ENCODE measurements at regions of chr7 and their contacts with region 1.

Region 1: DNA sequence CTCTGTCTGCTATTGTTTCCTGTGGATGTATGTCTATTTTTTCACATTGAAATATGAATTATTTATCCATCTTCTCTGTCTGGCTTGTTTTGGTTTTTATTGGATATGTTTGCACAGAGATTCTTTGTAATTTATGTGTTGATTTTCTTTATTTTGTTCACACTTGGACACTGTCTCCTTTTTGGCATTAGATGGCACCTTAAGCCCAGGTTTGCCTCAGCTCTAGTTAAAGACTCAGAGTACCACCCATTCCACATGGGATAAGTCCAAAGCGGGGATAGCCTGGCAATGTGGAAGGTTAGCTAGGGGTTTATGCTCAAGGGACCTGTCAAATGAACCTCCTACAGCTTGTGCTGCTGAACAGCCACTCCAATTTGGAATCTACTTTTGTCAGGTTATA is 14.1 kb downstream of the FEZF1 start:
- DNase-seq: no peak
- ATAC-seq: no peak
- H3K4me3 Mint-ChIP-seq: no peak overlapping the region
- H3K27ac Mint-ChIP-seq: no peak overlapping the region
- H3K4me1 Mint-ChIP-seq: no peaks in the 10 kb centered on the region
- H3K27me3 Mint-ChIP-seq: peaks cover 4% of the 10 kb centered on the region
- CTCF ChIP-seq: no peak

Region 2: DNA sequence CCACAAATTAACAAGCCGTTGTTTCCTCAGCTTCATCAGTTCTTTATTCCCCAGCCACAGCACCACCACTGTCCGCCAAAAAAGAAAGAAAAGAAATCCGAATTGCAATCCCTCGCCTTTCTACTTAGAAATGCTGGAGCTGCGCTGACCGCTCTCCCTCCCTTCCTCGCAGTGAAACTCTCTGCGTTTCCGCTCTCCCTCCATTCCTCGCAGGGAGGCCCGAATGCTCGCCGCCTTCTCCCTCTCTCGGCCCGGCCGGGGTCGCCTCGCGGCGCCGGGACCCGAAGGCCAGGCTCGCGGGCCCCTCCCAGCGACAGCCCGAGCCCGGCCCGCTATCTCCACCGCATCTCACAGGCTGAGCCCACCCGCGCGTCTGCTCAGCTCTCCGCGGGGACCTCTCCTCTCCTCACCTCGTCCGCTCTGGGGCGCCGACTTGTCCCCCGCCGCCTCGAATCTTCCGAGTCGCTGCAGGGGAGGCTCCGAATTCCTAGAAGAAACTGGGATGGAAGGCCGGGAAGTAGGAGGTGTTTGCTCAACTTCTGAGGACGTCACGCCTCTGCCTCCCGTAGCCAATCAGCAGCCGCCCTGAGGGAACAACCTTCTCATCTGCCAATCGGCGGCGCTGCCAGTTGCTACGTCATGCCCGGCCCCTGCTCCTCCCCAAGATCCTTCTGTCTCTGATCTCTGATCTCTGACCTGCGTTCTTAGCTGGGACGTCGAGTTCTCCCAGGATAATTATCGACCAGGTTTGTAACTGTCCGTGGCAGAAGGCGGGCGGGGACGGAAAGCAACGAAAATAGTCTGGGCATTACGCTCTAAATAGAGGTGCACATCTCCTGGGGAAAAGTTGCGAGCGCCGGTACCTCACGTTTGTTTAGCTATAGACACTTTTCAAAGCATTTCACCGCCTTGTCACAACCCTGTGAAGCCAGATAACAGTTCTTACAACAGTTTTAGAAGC is 146.4 kb before region 1 on chr7 and contains the start of gene AASS:
- CTCF ChIA-PET with region 1: no interaction called
- POLR2A ChIA-PET with region 1: no interaction called
- intact Hi-C with region 1: no loop called
- DNase-seq: peak; percentile 78
- ATAC-seq: peak; percentile 98
- H3K4me3 Mint-ChIP-seq: peak within 1 kb of the TSS; percentile 96
- H3K27ac Mint-ChIP-seq: peak within 1 kb of the TSS; percentile 80
- H3K4me1 Mint-ChIP-seq: peaks cover 14% of the 10 kb centered on the region
- H3K27me3 Mint-ChIP-seq: peaks cover 8% of the 10 kb centered on the region
- CTCF ChIP-seq: no peak
- total RNA-seq, gene AASS: 5.9 and 6.3 TPM in 2 replicates

Region 3: DNA sequence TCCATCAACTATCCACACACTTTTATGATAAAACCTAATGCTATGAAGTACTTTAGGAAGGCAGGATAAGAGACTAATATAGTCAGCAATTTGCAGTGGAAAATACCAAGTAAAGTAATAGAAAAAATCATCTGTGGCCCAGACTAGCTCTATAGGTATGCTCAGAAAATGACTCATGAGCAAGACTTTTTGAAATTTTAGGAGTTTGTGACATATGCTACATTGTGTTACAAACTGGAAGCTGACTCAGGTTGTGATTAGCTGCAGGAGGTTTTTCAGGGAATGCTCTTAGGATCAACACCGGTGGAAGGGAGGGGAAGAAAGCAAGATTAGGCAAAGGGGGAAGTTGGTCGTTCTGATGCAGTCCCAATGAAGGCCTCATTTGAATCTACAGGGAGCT is 42.0 kb before region 1 on chr7:
- CTCF ChIA-PET with region 1: no interaction called
- POLR2A ChIA-PET with region 1: no interaction called
- intact Hi-C with region 1: loop called (anchors 1 kb)
- DNase-seq: no peak
- ATAC-seq: no peak
- H3K4me3 Mint-ChIP-seq: no peak overlapping the region
- H3K27ac Mint-ChIP-seq: no peak overlapping the region
- H3K4me1 Mint-ChIP-seq: no peaks in the 10 kb centered on the region
- H3K27me3 Mint-ChIP-seq: no peaks in the 10 kb centered on the region
- CTCF ChIP-seq: no peak